Tibial artery (tissue), 4 donors: ENCODE measurements at regions of chr13 and their contacts with region 1.

Region 1: DNA sequence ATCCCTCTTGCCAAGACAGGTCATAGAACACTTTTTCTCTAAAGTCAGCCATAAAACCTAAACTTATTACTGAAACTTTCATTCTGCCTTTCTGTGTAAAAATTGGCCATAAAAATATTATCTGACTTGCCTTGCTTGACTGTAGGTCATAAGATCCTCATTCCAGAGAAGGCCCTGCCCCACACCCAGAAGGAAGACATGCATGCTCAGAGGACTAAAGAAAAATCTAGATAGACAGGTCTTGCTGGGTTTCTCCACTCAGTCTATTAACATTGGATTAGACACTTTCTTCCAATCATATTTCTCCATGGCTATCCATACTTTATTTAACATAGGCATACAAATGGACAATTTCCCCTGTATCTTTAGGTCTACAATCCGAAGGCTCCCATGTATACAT is 1066.5 kb downstream of the SLITRK1 start:
- DNase-seq: no peak
- H3K4me3 ChIP-seq: no peak overlapping the region
- H3K27ac ChIP-seq: no peak overlapping the region
- H3K4me1 ChIP-seq: peaks cover 0 to 7% (median 0%) of the 10 kb centered on the region in 4 donors
- H3K27me3 ChIP-seq: no peaks in the 10 kb centered on the region
- CTCF ChIP-seq: no peak

Region 2: GRCh38 chr13:82800391-82800790 is 15.4 kb before region 1 on chr13:
- intact Hi-C with region 1: loop called (anchors 1 kb)
- DNase-seq: no peak
- H3K4me3 ChIP-seq: no peak overlapping the region
- H3K27ac ChIP-seq: no peak overlapping the region
- H3K4me1 ChIP-seq: no peaks in the 10 kb centered on the region
- H3K27me3 ChIP-seq: no peaks in the 10 kb centered on the region
- CTCF ChIP-seq: no peak